ENCODE measurements at regions of chr2 and their contacts with region 1.

Region 1: GRCh38 chr2:40783704-40784103 is 331.8 kb upstream of the SLC8A1 start:
- DNase-seq: no peak
- H3K4me3 ChIP-seq: no peak overlapping the region
- H3K27ac ChIP-seq: no peak overlapping the region
- H3K4me1 ChIP-seq: no peaks in the 10 kb centered on the region
- H3K27me3 ChIP-seq: no peaks in the 10 kb centered on the region
- CTCF ChIP-seq: no peak
- POLR2A ChIP-seq: no peak

Region 2: GRCh38 chr2:41791523-41791922 is 1007.8 kb after region 1 on chr2:
- intact Hi-C with region 1: loop called (anchors 10 kb)
- DNase-seq: no peak
- H3K4me3 ChIP-seq: no peak overlapping the region
- H3K27ac ChIP-seq: no peak overlapping the region
- H3K4me1 ChIP-seq: no peaks in the 10 kb centered on the region
- H3K27me3 ChIP-seq: no peaks in the 10 kb centered on the region
- CTCF ChIP-seq: no peak
- POLR2A ChIP-seq: no peak